ENCODE measurements at regions of chr1 and their contacts with region 1.

Region 1: DNA sequence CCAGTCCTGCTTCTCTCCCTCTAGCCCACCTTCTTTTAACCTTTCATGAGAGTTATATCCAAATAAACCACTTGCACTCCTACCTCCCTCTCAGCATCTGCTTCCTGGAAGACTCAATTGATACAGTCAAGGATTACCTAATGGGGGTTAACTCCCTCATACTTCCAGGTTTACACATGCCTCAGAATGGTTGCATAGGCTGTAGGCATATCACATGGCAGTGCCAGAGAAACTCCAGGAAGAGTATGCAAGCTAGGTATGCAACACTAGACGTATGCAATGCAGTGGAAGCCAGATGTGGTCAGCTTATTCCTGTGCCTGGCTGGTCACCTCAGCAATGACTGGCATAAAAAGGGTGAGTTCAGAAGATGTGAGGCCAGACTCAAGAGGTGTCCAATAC is 32.7 kb upstream of the VANGL1 start:
- DNase-seq: no peak
- ATAC-seq: no peak
- H3K4me3 ChIP-seq: no peak overlapping the region
- H3K27ac ChIP-seq: no peak overlapping the region
- H3K4me1 ChIP-seq: no peaks in the 10 kb centered on the region; a peak in 1 of 4 replicates
- H3K27me3 ChIP-seq: no peaks in the 10 kb centered on the region
- CTCF ChIP-seq: no peak
- POLR2A ChIP-seq: no peak
- RAD21 ChIP-seq: no peak

Region 2: DNA sequence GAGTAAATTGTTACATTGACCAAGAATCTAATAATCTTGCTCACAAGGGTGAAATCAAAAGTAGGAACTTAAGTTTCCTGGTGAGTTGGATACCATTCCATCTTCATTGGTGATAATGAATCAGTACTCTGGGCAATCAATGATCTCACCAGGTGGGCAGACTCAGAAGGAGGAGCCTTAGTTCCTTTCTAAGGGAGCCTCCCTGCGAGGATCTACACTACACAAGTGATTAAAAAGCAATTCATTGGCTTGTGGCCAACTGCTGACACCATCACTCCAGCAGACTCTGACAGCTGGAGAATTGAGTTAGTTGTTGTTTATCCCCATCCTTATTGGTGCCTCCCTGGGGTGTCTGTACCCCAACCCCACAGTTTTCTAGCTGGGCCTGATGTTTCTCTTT is 51.3 kb before region 1 on chr1:
- CTCF ChIA-PET with region 1: no interaction called
- POLR2A ChIA-PET with region 1: no interaction called
- RAD21 ChIA-PET with region 1: no interaction called
- intact Hi-C with region 1: no loop called
- DNase-seq: no peak
- ATAC-seq: no peak
- H3K4me3 ChIP-seq: no peak overlapping the region
- H3K27ac ChIP-seq: no peak overlapping the region
- H3K4me1 ChIP-seq: no peaks in the 10 kb centered on the region
- H3K27me3 ChIP-seq: no peaks in the 10 kb centered on the region
- CTCF ChIP-seq: no peak
- POLR2A ChIP-seq: no peak
- RAD21 ChIP-seq: no peak

Region 3: GRCh38 chr1:115620950-115621349 is 11.9 kb after region 1 on chr1:
- CTCF ChIA-PET with region 1: no interaction called
- POLR2A ChIA-PET with region 1: no interaction called
- RAD21 ChIA-PET with region 1: no interaction called
- intact Hi-C with region 1: no loop called
- DNase-seq: no peak
- ATAC-seq: no peak
- H3K4me3 ChIP-seq: no peak overlapping the region
- H3K27ac ChIP-seq: no peak overlapping the region
- H3K4me1 ChIP-seq: no peaks in the 10 kb centered on the region
- H3K27me3 ChIP-seq: no peaks in the 10 kb centered on the region
- CTCF ChIP-seq: no peak
- POLR2A ChIP-seq: no peak
- RAD21 ChIP-seq: no peak

Region 4: DNA sequence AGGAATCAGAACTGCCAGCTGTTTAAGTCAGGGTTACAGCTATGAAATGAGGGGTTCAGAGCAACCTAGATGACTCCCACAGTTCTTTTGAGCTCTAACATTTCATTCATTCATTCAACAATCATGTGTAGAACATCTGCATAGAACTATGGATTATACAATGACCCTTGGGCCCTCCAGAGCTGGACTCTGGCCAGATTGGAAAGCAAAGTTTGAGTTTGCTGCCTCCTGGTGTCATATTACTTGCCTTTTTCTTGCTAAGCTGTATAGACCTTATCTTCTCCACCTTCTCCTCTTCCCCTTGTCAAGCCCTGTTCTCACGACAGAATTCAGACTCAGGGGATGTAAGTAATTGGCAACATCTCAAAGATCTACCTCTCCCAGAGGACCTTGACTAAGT is 155.5 kb after region 1 on chr1:
- CTCF ChIA-PET with region 1: interaction called, 46 read pairs
- POLR2A ChIA-PET with region 1: no interaction called
- RAD21 ChIA-PET with region 1: interaction called, 7 to 14 read pairs
- intact Hi-C with region 1: loop called (anchors 1 kb)
- DNase-seq: peak; percentile 34
- ATAC-seq: peak; percentile 78
- H3K4me3 ChIP-seq: no peak overlapping the region
- H3K27ac ChIP-seq: no peak overlapping the region
- H3K4me1 ChIP-seq: peaks cover 0 to 5% of the 10 kb centered on the region in 2 experiments; a peak in 2 of 4 replicates
- H3K27me3 ChIP-seq: no peaks in the 10 kb centered on the region
- CTCF ChIP-seq: peak; percentile 35 to 68 (median 55); a peak in 5 of 6 replicates
- POLR2A ChIP-seq: no peak
- RAD21 ChIP-seq: peak; percentile 82

Region 5: DNA sequence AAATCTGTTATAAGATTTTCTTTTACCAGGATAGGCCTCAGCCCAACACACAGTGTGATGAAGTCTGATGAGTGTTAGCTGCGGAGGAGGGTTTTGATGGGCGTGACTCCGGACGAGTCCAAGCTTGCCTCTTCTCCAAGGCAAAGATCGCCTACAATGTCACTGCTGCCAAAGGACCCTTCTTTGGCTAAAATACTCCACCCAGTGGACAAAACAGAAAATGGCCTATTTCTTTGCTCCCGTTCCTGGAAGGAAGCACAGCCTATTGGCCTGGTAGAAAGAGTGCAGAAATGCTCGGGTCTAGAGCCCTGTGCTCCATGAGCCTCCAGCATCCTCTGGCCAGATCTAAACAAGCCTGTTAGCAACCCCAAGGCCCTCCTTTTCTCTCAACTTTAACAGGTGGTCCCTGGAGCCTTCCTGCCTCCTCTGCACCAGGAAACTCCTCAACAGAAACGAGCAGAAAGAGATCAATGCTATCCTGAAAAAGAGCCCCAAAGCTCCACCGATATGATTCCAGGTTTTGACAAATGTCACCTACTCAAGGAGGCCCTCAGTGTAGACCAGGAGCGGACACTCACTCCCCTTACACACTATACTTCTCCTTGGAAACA is 162.9 kb after region 1 on chr1:
- CTCF ChIA-PET with region 1: interaction called, 33 read pairs
- POLR2A ChIA-PET with region 1: no interaction called
- RAD21 ChIA-PET with region 1: no interaction called
- intact Hi-C with region 1: loop called (anchors 2 kb)
- DNase-seq: peak; percentile 82
- ATAC-seq: peak; percentile 96
- H3K4me3 ChIP-seq: peak overlapping the region; percentile 12 to 29; a peak in 2 of 4 replicates
- H3K27ac ChIP-seq: peak overlapping the region; percentile 38; the same call in 1 of the 2 replicates
- H3K4me1 ChIP-seq: peaks cover 5 to 13% of the 10 kb centered on the region in 2 experiments; a peak in 3 of 4 replicates
- H3K27me3 ChIP-seq: no peaks in the 10 kb centered on the region
- CTCF ChIP-seq: peak; percentile 74 to 80 (median 79)
- POLR2A ChIP-seq: no peak
- RAD21 ChIP-seq: peak; percentile 92